Dendritic cell treated with granulocyte-macrophage colony-stimulating factor and Interleukin-4, amounts not matched to agents 40 ng/mL and 50 ng/mL, for 4 days (primary cell): ENCODE measurements at regions of chr6 and their contacts with region 1.

Region 1: GRCh38 chr6:37791156-37791919 is 28.2 kb upstream of the ZFAND3 start:
- H3K4me3 Mint-ChIP-seq: no peak overlapping the region
- H3K27ac Mint-ChIP-seq: peak overlapping the region; percentile 25
- H3K4me1 Mint-ChIP-seq: peaks cover 19% of the 10 kb centered on the region
- H3K27me3 Mint-ChIP-seq: peaks cover 20% of the 10 kb centered on the region

Region 2: DNA sequence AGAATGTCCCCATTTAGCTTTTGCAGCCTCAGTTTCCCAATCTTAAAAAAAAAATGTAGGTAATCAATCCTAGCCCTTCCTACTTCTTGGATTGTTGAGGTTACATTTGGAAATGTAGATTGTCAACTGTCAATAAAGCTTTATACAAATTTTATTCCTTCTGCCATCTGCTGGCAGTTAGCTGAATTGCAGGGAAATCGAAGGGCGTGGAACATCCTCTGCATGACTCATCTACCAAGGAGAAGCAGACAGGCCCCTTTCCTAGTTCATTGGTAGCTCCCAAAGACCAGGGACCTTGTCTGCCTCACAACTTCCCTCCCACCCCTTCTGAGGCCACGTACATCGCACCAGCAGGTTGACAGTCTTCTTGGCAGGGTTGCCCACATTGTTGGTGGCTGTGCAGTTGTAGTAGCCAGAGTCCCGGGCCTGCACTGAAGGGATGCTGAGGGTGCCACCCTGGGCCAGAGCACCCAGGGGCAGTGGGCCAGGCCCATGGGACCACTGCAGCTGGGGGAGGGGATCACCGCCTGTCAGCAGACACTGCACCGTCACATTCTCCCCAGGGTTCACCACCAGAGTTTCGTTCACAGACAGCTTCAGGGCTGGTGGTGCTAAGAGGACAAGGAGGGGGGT is 137.3 kb before region 1 on chr6:
- intact Hi-C with region 1: no loop called
- H3K4me3 Mint-ChIP-seq: no peak overlapping the region
- H3K27ac Mint-ChIP-seq: no peak overlapping the region
- H3K4me1 Mint-ChIP-seq: no peaks in the 10 kb centered on the region
- H3K27me3 Mint-ChIP-seq: peaks cover 50% of the 10 kb centered on the region

Region 3: GRCh38 chr6:37860226-37860839 is 69.0 kb after region 1 on chr6:
- intact Hi-C with region 1: loop called (anchors 2 kb)
- H3K4me3 Mint-ChIP-seq: no peak overlapping the region
- H3K27ac Mint-ChIP-seq: no peak overlapping the region
- H3K4me1 Mint-ChIP-seq: peaks cover 31% of the 10 kb centered on the region
- H3K27me3 Mint-ChIP-seq: no peaks in the 10 kb centered on the region

Region 4: DNA sequence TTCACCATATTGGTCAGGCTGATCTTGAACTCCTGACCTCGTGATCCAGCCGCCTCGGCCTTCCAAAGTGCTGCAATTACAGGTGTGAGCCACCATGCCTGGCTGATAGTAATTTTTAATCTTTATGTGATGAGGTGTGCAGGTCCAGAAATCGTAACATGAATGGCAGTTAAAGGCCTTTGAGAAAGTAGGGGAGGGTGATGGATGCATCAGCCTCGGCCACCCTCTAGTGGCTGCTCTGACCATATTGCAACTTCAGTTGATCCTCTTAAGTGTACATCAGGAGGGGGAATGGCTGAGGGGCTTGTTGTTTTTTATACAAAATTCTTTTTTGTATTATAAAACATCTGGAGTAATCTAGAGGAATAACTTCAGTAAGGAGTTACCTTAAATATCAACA is 221.2 kb after region 1 on chr6:
- intact Hi-C with region 1: loop called (anchors 10 kb)
- H3K4me3 Mint-ChIP-seq: no peak overlapping the region
- H3K27ac Mint-ChIP-seq: no peak overlapping the region
- H3K4me1 Mint-ChIP-seq: peaks cover 12% of the 10 kb centered on the region
- H3K27me3 Mint-ChIP-seq: no peaks in the 10 kb centered on the region

Region 5: GRCh38 chr6:38493931-38494547 is 702.7 kb after region 1 on chr6:
- intact Hi-C with region 1: loop called (anchors 5 kb)
- H3K4me3 Mint-ChIP-seq: no peak overlapping the region
- H3K27ac Mint-ChIP-seq: no peak overlapping the region
- H3K4me1 Mint-ChIP-seq: no peaks in the 10 kb centered on the region
- H3K27me3 Mint-ChIP-seq: no peaks in the 10 kb centered on the region